ENCODE measurements at regions of chr7 and their contacts with region 1.

Region 1: DNA sequence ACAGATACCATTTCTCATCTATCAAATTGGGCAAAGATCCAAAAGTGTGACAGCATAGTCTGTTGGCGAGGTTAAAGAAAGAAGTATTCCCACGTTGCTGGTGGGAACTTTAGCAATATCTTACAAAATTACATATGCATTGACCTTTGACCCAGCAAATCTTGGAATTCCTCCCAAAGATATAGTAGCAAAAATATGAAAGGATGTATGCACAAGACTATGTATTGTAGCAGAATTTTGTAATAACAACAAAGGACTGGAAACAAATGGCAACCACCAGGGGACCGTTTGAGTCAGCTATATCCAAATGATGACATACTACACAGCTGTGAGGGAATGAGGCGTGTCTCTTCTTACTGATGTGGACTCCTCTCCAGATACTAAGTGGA is 50.2 kb downstream of the KCNH2 start:
- DNase-seq: no peak
- H3K4me3 ChIP-seq: no peak overlapping the region
- H3K27ac ChIP-seq: no peak overlapping the region
- H3K4me1 ChIP-seq: peaks cover 0 to 16% of the 10 kb centered on the region in 2 experiments; a peak in 2 of 4 replicates
- H3K27me3 ChIP-seq: 0 out of 2 replicates have a peak, but pooled peaks cover 14% of the 10 kb centered on the region
- CTCF ChIP-seq: no peak
- EP300 ChIP-seq: no peak
- RAD21 ChIP-seq: no peak

Region 2: GRCh38 chr7:150903606-150904005 is 24.3 kb before region 1 on chr7:
- CTCF ChIA-PET with region 1: interaction called, 72 read pairs
- POLR2A ChIA-PET with region 1: interaction called, 10 read pairs
- DNase-seq: peak; percentile 40
- H3K4me3 ChIP-seq: no peak overlapping the region
- H3K27ac ChIP-seq: peak overlapping the region in 1 of 2 experiments; percentile 12; a peak in 1 of 4 replicates
- H3K4me1 ChIP-seq: peaks cover 11 to 35% of the 10 kb centered on the region in 2 experiments; a peak in 3 of 4 replicates
- H3K27me3 ChIP-seq: no peaks in the 10 kb centered on the region
- CTCF ChIP-seq: no peak
- EP300 ChIP-seq: peak in 1 of 2 experiments; percentile 81; a peak in 2 of 4 replicates
- RAD21 ChIP-seq: no peak

Region 3: DNA sequence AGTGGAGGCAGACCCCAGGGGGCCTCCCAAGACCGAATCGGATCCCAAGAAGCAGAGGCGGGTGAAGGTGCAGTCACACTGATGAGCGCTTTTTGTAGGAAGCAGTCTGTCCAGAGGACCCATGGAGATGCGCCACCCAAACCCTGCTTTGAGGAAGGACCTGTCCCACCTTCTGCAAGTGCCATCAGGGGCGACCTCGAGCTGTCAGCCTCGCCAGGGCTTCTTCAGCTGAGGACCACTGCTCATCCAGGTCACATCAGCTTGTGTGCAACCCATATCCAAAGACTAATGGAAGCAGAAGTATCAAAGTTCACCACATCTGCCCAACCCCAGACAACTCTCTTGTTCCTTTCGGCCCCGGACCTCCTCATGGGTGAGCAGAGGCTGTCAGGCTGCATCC is 11.3 kb before region 1 on chr7:
- CTCF ChIA-PET with region 1: interaction called, 30 read pairs
- POLR2A ChIA-PET with region 1: interaction called, 10 read pairs
- DNase-seq: no peak
- H3K4me3 ChIP-seq: no peak overlapping the region
- H3K27ac ChIP-seq: no peak overlapping the region
- H3K4me1 ChIP-seq: no peaks in the 10 kb centered on the region
- H3K27me3 ChIP-seq: peaks cover 53% of the 10 kb centered on the region
- CTCF ChIP-seq: no peak
- EP300 ChIP-seq: no peak
- RAD21 ChIP-seq: no peak

Region 4: GRCh38 chr7:150941981-150942590 is 14.1 kb after region 1 on chr7:
- CTCF ChIA-PET with region 1: interaction called, 11 read pairs
- POLR2A ChIA-PET with region 1: interaction called, 7 read pairs
- DNase-seq: peak; percentile 71
- H3K4me3 ChIP-seq: no peak overlapping the region
- H3K27ac ChIP-seq: peak overlapping the region in 1 of 2 experiments; percentile 82; a peak in 2 of 4 replicates
- H3K4me1 ChIP-seq: peaks cover 0 to 84% of the 10 kb centered on the region in 2 experiments; a peak in 2 of 4 replicates
- H3K27me3 ChIP-seq: 0 out of 2 replicates have a peak, but pooled peaks cover 11% of the 10 kb centered on the region
- CTCF ChIP-seq: no peak
- EP300 ChIP-seq: 0 out of 4 replicates have a peak, but pooled peaks of 1 of the 2 experiments have one; percentile 17
- RAD21 ChIP-seq: no peak

Region 5: DNA sequence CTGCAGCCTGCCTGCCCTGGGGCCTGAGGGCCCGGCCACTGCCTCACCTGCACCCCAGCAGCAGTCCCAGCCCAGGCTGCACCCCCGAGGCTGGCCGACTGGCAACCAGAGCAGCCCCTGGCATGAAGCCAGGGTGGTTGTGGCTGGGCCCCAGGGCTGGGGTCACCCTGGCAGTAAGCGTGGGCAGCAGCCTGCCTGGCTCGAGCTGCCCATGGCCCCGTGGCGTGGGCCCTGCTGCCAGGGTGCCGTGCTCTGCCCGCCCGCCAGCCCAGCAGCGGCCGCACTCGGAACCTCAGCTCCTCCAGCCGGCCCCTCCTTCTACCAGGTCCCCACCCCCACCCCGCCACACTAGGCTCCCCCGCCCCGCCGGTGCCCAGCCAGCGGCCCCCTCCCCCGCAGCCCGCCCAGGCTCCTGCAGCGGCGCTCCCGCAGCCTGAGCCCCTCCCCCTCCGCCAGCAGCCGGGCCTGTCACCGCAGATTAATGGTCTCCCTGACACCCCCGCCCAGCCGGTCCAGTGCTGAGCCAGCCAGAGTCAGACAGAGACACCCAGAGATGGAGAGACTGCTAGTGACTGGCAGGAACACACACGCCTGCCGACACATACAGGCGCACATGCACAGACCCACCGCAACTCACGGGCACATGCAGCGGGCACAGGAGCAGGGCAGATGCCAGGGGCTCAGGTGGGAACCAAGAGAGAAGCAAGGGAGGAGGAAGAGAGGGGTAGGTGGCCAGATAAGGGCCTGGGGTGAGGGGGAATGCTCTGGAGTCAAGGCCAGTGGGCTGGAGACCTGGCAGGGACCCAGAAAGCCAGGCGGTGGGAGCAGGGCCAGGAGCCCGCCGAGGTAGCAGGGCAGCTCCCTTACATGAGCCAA is 27.8 kb after region 1 on chr7:
- CTCF ChIA-PET with region 1: interaction called, 86 read pairs
- POLR2A ChIA-PET with region 1: no interaction called
- DNase-seq: peak; percentile 97
- H3K4me3 ChIP-seq: peak overlapping the region in 1 of 2 experiments; percentile 45; a peak in 2 of 4 replicates
- H3K27ac ChIP-seq: peak overlapping the region in 1 of 2 experiments; percentile 94; a peak in 3 of 4 replicates
- H3K4me1 ChIP-seq: peaks cover 0 to 85% of the 10 kb centered on the region in 2 experiments; a peak in 2 of 4 replicates
- H3K27me3 ChIP-seq: peaks cover 15% of the 10 kb centered on the region; the same call in 1 of the 2 replicates
- CTCF ChIP-seq: no peak
- EP300 ChIP-seq: peak in 1 of 2 experiments; percentile 12; a peak in 1 of 4 replicates
- RAD21 ChIP-seq: peak; percentile 3; the same call in 1 of the 2 replicates

Region 6: DNA sequence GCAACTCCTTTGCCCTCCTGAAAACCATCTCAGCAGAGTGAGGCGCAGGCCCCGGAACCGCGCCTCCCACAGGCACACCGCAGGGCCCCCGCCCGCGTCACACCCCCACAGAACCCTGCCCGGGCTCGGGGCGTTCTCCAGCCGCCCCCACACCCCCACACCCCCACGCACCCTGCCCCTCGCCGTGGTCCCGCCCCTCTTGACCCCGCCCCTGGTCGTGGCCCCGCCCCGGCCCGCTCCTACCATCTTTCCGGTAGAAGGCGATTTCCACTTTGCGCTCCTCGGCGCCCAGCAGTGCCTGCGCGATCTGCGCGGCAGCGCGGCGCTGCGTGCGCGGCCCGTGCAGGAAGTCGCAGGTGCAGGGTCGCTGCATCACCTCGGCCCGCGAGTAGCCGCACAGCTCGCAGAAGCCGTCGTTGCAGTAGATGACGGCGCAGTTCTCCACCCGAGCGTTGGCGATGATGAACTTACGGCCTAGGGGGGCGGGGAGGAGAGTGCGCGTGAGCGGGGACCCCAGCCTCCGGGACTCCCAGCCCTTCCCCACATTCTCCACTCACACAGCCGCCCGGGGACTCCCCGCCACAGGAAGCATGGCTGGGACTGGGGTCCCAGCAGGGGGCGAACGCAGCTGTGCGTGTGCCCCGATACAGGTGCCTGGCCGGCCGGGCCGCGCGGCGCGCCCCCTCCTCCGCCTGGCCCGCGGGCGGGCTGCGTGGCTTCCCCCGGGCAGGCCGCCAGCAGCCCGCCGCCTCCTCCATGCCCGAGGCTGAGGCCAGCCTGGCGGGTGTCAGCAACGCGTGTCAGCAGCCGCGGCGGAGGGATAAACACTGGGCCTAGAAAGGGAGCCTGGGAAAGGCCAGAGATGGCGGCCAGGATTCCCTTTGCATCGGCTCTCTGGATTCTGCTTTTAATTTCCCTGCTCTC is 46.8 kb after region 1 on chr7:
- CTCF ChIA-PET with region 1: interaction called, 17 read pairs
- POLR2A ChIA-PET with region 1: interaction called, 7 read pairs
- DNase-seq: peak; percentile 82
- H3K4me3 ChIP-seq: peak overlapping the region in 1 of 2 experiments; percentile 37; a peak in 2 of 4 replicates
- H3K27ac ChIP-seq: peak overlapping the region in 1 of 2 experiments; percentile 100; a peak in 3 of 4 replicates
- H3K4me1 ChIP-seq: peaks cover 0 to 90% of the 10 kb centered on the region in 2 experiments; a peak in 2 of 4 replicates
- H3K27me3 ChIP-seq: peaks cover 71% of the 10 kb centered on the region
- CTCF ChIP-seq: peak; percentile 36
- EP300 ChIP-seq: no peak
- RAD21 ChIP-seq: peak; percentile 38; the same call in 1 of the 2 replicates